ENCODE measurements at regions of chr11 and their contacts with region 1.

Region 1: GRCh38 chr11:123020968-123021367 is 39.3 kb upstream of the BSX start:
- DNase-seq: no peak
- H3K4me3 ChIP-seq: no peak overlapping the region
- H3K27ac ChIP-seq: no peak overlapping the region
- H3K4me1 ChIP-seq: no peaks in the 10 kb centered on the region
- H3K27me3 ChIP-seq: no peaks in the 10 kb centered on the region; a peak in 1 of 7 replicates
- CTCF ChIP-seq: peak; percentile 48 to 84 (median 81)
- EP300 ChIP-seq: no peak
- POLR2A ChIP-seq: no peak
- RAD21 ChIP-seq: peak; percentile 86

Region 2: DNA sequence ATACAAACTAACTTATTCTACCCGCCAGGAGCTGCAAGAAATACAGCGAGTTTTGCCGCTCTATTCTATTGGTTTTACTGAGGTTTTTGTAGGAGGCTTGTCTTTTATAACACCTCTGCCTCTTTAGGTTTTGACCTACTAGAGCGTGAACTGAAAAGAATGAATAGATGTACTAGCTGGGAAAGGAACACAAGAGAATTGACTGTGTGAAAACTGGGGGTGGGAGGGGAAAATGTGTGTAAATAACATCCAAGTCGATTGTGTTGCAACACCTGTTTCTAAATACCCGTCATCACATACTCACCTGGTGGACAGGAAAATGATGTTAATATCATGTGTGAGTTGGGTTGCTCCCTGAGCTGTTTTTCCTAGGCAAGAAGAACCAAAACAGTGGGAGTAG is 151.3 kb before region 1 on chr11:
- CTCF ChIA-PET with region 1: interaction called, 95 read pairs
- POLR2A ChIA-PET with region 1: no interaction called
- DNase-seq: no peak
- H3K4me3 ChIP-seq: no peak overlapping the region
- H3K27ac ChIP-seq: no peak overlapping the region
- H3K4me1 ChIP-seq: no peaks in the 10 kb centered on the region
- H3K27me3 ChIP-seq: no peaks in the 10 kb centered on the region
- CTCF ChIP-seq: no peak
- EP300 ChIP-seq: no peak
- POLR2A ChIP-seq: no peak
- RAD21 ChIP-seq: no peak

Region 3: GRCh38 chr11:122910775-122911174 is 110.2 kb before region 1 on chr11:
- CTCF ChIA-PET with region 1: interaction called, 48 read pairs
- POLR2A ChIA-PET with region 1: no interaction called
- DNase-seq: no peak
- H3K4me3 ChIP-seq: no peak overlapping the region
- H3K27ac ChIP-seq: no peak overlapping the region
- H3K4me1 ChIP-seq: no peaks in the 10 kb centered on the region
- H3K27me3 ChIP-seq: no peaks in the 10 kb centered on the region
- CTCF ChIP-seq: peak in 2 of 3 experiments; percentile 61 to 65; a peak in 3 of 4 replicates
- EP300 ChIP-seq: no peak
- POLR2A ChIP-seq: no peak
- RAD21 ChIP-seq: peak; percentile 87

Region 4: DNA sequence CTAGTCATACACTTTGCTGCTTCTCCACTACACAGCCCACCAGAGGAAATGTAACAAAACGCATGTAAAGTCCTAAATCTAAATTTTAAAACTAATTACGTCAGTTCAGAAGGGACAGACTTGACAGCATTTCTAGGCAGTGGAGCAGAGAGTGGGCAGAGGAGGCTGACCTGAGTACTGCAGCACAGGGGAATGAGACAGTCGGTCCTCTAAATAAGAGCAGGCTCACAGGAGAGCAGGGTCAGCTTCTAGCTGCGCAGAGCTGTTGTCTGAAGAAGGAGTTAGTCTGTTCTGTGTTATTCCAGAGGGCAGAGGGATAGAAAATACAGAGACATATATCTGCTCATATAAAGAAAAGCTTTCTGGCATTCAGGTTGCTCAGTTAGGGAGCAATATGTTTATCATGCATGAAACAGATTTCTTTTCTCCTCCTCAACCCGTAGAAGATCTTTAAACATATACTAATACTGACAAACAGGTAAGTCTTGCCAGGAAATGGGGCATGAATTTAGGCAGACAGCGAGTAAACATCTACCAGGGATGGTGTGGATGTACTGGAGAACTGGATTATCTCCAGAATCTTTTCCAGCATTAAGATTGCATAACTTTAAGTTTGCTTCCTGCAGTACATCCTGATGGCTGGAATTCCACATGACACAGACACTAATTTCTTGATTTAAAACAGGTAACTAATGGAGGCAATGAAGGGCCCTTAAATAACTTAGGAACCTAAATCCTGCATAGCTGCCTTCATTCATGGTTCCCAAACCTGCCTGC is 97.9 kb before region 1 on chr11:
- CTCF ChIA-PET with region 1: interaction called, 13 read pairs
- POLR2A ChIA-PET with region 1: interaction called, 3 read pairs
- DNase-seq: no peak
- H3K4me3 ChIP-seq: no peak overlapping the region
- H3K27ac ChIP-seq: no peak overlapping the region
- H3K4me1 ChIP-seq: peaks cover 0 to 5% (median 2%) of the 10 kb centered on the region in 4 experiments; a peak in 1 of 7 replicates
- H3K27me3 ChIP-seq: no peaks in the 10 kb centered on the region
- CTCF ChIP-seq: no peak
- EP300 ChIP-seq: no peak
- POLR2A ChIP-seq: no peak
- RAD21 ChIP-seq: no peak

Region 5: DNA sequence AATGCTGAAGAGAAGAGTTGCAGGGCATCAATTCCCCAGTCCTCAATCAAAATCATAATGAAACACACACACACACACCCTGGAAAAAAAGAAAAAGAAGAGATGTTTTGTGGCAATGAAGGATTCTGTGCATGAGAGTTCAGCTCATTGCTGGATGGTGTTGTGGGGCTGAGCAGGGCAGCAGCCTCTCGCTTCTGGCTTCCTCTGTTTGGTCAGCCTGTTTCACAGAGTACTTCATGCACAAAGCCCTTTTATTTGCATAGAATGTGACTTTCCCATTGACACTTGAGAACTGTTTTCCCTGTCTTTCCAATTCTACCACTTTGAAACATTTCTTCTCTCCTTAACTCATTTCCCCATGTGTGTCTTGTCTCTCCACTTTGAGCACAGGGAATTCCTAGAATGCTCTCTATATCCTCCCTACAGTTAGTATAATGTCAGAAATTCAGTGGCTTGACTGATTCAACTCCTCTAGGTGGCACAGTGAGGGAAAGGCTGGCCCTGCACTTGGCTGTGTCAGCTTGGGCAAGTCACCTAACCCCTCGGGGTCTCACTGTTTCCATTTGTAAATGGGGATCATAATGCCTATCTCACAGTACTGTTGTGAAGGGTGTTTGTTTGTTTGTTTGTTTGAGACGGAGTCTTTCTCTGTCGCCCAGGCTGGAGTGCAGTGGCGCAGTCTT is 14.0 kb before region 1 on chr11:
- CTCF ChIA-PET with region 1: interaction called, 98 read pairs
- POLR2A ChIA-PET with region 1: no interaction called
- DNase-seq: no peak
- H3K4me3 ChIP-seq: no peak overlapping the region
- H3K27ac ChIP-seq: no peak overlapping the region
- H3K4me1 ChIP-seq: peaks cover 0 to 4% (median 1%) of the 10 kb centered on the region in 4 experiments; a peak in 2 of 7 replicates
- H3K27me3 ChIP-seq: no peaks in the 10 kb centered on the region
- CTCF ChIP-seq: peak in 2 of 3 experiments; percentile 6 to 11; a peak in 1 of 4 replicates
- EP300 ChIP-seq: no peak
- POLR2A ChIP-seq: no peak
- RAD21 ChIP-seq: no peak

Region 6: DNA sequence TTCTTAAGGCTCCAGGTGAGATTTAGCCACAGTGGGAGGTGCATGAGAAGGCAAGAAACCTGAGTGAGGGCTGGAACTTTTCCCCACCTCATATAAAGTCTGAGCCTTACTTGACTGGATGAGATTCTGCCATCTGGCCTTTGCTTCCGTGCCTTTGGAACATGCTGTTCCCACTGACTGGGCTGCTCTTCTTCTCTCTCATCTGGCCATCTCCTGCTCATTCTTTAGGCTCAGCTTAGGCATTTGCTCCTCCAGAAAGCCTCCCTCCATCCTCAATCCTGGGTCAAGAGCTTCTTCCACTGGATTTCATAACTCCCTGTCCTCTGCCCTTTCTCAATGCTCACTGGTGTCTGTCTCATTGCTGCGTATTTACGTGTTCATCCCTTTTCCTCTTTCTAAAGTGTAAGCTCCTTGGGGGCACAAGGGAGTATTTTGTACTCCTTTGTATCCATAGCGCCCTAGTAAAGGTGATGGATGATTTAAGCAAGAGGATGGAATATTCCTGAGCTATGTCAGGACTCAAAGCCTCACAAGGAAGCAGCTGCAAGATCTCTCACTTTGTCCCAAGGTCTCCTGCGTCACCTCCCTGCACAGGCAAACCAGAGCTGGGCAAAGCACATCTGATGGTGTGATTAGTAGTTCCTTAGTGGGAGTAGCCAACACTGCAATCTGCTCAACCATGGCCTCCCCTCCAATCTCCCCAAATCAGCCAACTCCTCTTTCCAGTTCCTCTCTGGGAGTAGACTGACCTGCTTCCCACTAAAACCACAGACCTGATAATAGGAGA is 25.7 kb after region 1 on chr11:
- CTCF ChIA-PET with region 1: interaction called, 20 read pairs
- POLR2A ChIA-PET with region 1: no interaction called
- DNase-seq: no peak
- H3K4me3 ChIP-seq: no peak overlapping the region
- H3K27ac ChIP-seq: no peak overlapping the region
- H3K4me1 ChIP-seq: no peaks in the 10 kb centered on the region
- H3K27me3 ChIP-seq: no peaks in the 10 kb centered on the region
- CTCF ChIP-seq: no peak
- EP300 ChIP-seq: no peak
- POLR2A ChIP-seq: no peak
- RAD21 ChIP-seq: no peak

Measured in H1 (cell line).